Left ventricle myocardium inferior (tissue), 1 donor: ENCODE measurements at regions of chr20 and their contacts with region 1.

Region 1: DNA sequence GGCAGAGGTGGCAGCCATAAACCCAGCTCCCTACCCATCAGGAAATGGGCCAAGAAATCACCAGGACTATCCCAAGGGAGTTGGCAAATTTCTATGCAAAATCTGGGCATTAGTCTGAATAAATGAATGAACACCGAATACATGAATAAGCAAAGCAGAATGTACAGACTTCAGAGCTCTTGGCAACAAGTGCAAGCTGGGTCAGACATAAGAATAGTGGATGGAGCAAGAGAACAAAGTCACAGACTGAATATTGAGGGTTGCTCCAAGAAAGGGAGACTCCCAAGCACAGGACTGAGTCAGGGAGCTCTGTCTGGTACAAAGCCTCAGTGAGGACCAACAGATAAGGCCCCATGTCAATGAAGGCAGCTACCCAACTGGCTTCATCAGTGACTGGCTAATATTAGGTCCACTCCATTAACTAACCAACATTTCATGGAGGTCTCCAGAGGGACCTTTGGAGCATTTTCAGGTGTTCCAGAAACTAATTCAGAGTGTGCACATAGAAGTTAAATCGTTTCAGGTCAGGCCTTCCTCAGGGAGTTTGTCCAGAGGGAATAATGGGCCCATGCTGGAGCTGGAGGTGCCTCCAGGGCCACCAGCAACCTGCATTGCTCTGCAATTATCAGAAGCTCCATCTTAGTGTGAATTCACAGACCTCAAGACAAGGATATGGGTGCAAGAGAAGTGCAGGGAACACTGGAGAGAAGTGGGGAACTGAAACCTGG is 191.5 kb upstream of the RALGAPA2 start:
- DNase-seq: no peak
- H3K4me3 ChIP-seq: no peak overlapping the region
- H3K27ac ChIP-seq: no peak overlapping the region
- H3K4me1 ChIP-seq: no peaks in the 10 kb centered on the region
- H3K27me3 ChIP-seq: peaks cover 47% of the 10 kb centered on the region
- CTCF ChIP-seq: no peak

Region 2: DNA sequence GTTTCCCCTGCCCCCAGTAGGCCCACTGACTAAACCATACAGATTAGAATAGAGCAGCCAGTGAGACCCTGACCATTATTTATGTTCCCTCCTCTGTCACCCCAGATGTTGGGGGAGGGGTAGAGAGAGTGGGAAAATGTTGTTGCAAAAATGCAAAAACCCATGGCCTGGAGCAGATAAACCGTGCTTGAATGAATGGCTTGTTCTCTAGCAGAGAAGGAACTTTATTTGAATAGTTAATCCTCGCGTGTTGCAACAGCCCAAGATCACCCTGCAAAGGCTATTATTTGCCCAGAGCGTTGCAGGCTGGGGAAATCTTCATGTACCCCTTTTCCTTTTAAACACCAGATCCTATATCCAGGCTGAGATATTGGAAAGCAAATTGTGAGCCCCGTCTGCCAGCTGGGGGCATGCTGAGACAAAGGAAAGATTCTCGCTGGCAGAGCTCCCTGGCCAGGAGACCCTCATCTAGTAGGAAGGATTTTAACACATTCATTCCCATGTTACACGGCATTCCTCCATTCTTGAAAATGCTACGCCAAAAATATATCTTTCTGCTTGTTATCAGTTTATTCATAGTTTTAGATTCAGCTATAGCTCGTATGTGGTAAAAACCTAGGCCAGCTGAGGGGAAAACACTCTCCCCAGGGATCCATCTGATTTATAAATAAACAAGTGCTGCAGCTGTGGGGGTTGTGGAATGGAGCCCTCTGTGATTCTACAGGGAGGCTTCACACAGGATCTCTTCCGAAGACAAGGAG is 149.2 kb after region 1 on chr20:
- intact Hi-C with region 1: loop called (anchors 10 kb)
- DNase-seq: no peak
- H3K4me3 ChIP-seq: no peak overlapping the region
- H3K27ac ChIP-seq: no peak overlapping the region
- H3K4me1 ChIP-seq: no peaks in the 10 kb centered on the region
- H3K27me3 ChIP-seq: peaks cover 77% of the 10 kb centered on the region
- CTCF ChIP-seq: no peak